ENCODE measurements at regions of chr9 and their contacts with region 1.

Region 1: GRCh38 chr9:122350638-122351355 is 20.0 kb upstream of the PTGS1 start:
- DNase-seq: peak; percentile 89
- ATAC-seq: peak; percentile 87

Region 2: GRCh38 chr9:122099271-122099869 is 251.4 kb before region 1 on chr9:
- intact Hi-C with region 1: loop called (anchors 1 kb)
- DNase-seq: peak; percentile 93
- ATAC-seq: peak; percentile 81

Region 3: DNA sequence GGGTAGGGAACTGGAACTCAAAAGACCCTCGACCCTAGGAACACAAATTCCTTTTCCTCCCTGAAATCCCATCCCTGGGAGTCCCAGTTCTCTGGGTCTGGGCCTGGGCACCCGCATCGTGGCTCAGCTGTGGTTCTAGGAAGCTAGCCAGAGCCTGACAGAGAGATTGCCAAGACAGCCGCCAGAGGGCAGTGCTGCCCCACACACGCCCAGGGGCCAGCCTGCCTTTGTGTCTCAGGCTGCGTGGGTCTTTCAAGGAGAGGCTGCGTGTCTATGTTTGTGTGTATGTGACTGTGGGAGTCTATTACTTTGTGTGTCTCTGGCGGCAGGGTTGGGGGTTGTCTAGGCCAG is 225.7 kb before region 1 on chr9:
- intact Hi-C with region 1: loop called (anchors 1 kb)
- DNase-seq: peak; percentile 85
- ATAC-seq: peak; percentile 82

Region 4: GRCh38 chr9:122228568-122229484 is 122.0 kb before region 1 on chr9 and contains the start of gene LHX6:
- intact Hi-C with region 1: loop called (anchors 10 kb)
- DNase-seq: no peak
- ATAC-seq: no peak
- total RNA-seq, gene LHX6: 6.1 TPM

Region 5: GRCh38 chr9:122264360-122265148 is 86.2 kb before region 1 on chr9 and contains the starts of genes MRRF and RBM18:
- intact Hi-C with region 1: loop called (anchors 2 kb)
- DNase-seq: peak; percentile 97
- ATAC-seq: peak; percentile 90
- total RNA-seq, gene MRRF: 39.1 TPM
- total RNA-seq, gene RBM18: 38.5 TPM

Region 6: DNA sequence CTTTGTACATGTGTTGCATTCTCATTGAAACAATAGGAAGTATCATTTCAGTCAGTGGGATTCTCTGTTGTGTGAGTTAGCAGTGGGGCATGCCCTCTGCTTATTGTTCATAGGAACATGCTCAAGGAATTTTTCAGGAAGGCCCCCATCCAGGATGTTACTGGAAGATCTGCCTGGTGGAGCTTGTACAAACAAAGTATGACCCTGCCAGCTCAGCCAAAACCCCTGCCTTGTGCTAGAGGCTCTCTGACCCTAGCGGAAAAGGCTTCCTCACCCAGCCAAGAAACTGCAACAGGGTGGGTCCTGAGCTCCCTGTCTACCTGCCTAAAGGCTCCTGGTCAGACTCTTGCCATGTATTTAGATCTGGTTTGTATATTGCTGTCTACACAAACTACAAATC is 42.9 kb before region 1 on chr9:
- intact Hi-C with region 1: loop called (anchors 2 kb)
- DNase-seq: no peak
- ATAC-seq: peak; percentile 16

Region 7: GRCh38 chr9:122810306-122810946 is 459.6 kb after region 1 on chr9:
- intact Hi-C with region 1: loop called (anchors 5 kb)
- DNase-seq: no peak
- ATAC-seq: peak; percentile 85

Measured in Right ventricle myocardium inferior (tissue), 1 donor.